ENCODE measurements at regions of chr20 and their contacts with region 1.

Region 1: DNA sequence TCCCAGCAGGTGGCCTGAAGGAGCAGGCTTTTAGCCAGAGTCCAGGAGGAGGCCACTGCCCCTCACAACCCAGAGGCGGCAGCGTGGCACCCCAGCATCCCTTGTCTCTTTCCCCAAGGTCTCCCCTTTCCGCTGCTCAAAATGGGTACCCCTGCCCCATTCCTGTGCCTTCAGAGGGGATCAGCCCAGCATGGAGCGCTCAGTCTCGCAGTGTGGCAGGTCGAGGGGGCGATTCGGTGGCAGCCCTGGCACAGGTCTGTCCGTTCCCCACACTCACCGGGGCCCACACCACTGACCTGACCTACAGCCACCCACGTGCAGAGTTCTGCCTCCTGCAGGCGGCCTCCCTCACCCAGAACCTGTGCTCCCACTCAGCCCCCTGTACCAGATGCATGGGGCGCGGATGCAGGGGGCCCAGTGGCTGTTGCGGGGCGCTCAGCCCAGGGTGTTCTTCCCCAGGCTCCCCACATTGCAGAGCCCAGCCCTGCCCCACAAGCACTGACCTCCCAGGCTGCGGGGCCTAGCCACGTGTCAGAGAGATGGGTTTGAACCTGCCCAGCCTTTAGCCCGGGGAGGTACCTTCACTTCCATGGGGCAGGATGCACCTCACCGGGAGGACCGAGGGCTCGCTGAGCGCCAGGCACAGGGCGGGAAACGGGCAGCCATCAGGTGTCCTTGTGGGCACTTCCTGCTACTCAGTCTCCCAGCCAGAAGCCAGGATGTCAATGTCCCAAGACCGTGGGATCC is 41.8 kb downstream of the DSTN start:
- DNase-seq: peak in 1 of 2 experiments; percentile 52
- H3K4me3 ChIP-seq: no peak overlapping the region
- H3K4me1 ChIP-seq: no peaks in the 10 kb centered on the region; the same call in 1 of the 2 replicates
- H3K27me3 ChIP-seq: no peaks in the 10 kb centered on the region

Region 2: GRCh38 chr20:17542993-17543412 is 68.7 kb before region 1 on chr20:
- in situ Hi-C with region 1: loop called (anchors 5 kb)
- DNase-seq: no peak
- H3K4me3 ChIP-seq: no peak overlapping the region
- H3K4me1 ChIP-seq: no peaks in the 10 kb centered on the region
- H3K27me3 ChIP-seq: 0 out of 2 replicates have a peak, but pooled peaks cover 5% of the 10 kb centered on the region

Region 3: DNA sequence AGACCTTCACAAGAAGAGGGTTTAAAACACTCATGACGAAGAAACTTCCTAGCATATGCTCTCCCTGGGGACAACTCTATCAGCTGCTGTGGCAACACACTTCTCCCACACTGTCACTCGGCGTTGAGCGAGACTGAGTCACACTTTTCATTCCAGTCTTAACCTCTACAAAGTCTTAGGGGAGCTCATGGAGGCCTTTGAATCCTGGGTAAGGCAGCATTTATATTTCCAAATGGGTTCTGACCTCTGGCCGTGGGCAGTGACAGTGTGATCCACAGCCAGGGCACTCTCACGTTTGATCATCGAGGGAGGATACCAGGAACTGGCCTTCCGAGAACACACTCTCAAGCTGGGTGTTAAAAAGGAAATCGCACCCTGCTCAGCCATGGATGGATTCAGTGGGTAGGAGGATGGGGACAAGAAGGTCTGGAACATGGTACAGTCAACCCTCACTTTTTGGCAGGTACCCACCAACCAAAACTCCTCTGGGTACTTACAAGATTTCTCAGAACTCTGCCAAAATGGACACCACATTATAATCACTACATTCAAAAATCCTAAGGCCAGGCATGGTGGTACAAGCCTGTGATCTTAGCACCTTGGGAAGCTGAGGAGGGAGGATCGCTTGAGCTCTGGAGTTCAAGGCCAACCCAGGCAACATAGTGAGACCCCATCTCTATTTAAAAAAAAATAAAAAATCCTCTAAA is 50.8 kb after region 1 on chr20:
- in situ Hi-C with region 1: no loop called
- DNase-seq: no peak
- H3K4me3 ChIP-seq: no peak overlapping the region
- H3K4me1 ChIP-seq: peaks cover 2% of the 10 kb centered on the region; the same call in 1 of the 2 replicates
- H3K27me3 ChIP-seq: no peaks in the 10 kb centered on the region; the same call in 1 of the 2 replicates